Right lobe of liver (tissue), 6 donors: ENCODE measurements at regions of chr7 and their contacts with region 1.

Region 1: GRCh38 chr7:22559829-22560489 is 60.0 kb upstream of the STEAP1B start:
- DNase-seq: peak in 2 of 3 donors; percentile 56 to 71
- ATAC-seq: peak; percentile 91 to 94 (median 91)
- H3K4me3 ChIP-seq: no peak overlapping the region
- H3K27ac ChIP-seq: no peak overlapping the region
- H3K4me1 ChIP-seq: peaks cover 0 to 10% (median 4%) of the 10 kb centered on the region in 4 donors
- H3K27me3 ChIP-seq: no peaks in the 10 kb centered on the region
- CTCF ChIP-seq: peak; percentile 85 to 96 (median 90)
- POLR2A ChIP-seq: no peak

Region 2: DNA sequence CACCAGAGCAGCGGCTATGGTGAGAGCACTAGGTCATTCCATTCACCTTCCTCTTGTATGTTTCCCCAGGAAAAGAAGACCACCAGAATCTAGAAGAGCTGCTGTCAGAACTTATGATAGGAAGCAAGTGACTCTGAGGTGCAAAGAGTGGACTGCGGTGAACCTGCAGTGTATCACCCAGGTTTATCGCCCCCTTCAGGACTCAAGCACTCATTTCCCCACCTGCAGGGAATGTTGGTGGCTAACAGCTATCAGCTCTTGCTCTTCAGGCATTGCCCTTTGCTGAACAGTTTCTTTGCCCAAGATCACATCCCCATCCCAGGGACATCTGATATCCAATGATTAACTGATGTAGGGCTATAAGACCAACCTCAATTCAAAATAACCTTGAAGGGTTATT is 100.8 kb after region 1 on chr7:
- intact Hi-C with region 1: no loop called
- DNase-seq: no peak
- ATAC-seq: peak in 3 of 4 donors; percentile 24 to 51 (median 35)
- H3K4me3 ChIP-seq: no peak overlapping the region
- H3K27ac ChIP-seq: no peak overlapping the region
- H3K4me1 ChIP-seq: no peaks in the 10 kb centered on the region
- H3K27me3 ChIP-seq: no peaks in the 10 kb centered on the region
- CTCF ChIP-seq: peak in 3 of 4 donors; percentile 16 to 30 (median 29)
- POLR2A ChIP-seq: no peak

Region 3: DNA sequence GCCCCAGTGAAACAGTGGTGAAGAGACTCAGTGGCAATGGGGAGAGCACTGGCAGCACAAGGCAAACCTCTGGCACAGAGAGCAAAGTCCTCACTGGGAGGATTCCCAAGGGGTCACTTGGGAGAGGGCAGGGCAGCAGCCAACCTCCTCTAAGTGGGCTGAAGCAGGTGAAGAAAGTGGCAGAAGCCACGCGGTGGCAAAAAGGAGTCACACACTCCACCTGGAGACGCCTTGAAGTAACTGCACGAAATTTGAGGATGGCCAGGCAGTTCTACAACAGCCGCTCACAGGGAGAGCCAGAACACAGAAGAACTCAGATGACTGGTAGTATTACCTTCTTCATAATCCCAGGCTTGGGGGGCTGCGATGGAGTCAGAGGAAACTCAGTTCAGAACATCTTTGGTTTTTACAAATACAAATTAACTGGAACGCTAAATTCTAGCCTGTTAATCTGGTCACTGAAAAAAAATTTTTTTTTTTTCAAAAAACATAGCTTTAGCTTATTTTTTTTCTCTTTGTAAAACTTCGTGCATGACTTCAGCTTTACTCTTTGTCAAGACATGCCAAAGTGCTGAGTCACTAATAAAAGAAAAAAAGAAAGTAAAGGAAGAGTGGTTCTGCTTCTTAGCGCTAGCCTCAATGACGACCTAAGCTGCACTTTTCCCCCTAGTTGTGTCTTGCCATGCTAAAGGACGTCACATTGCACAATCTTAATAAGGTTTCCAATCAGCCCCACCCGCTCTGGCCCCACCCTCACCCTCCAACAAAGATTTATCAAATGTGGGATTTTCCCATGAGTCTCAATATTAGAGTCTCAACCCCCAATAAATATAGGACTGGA is 166.6 kb after region 1 on chr7:
- intact Hi-C with region 1: loop called (anchors 5 to 10 kb)
- DNase-seq: peak in 1 of 3 donors; percentile 48
- ATAC-seq: peak; percentile 28 to 49 (median 32)
- H3K4me3 ChIP-seq: peak overlapping the region in 2 of 3 donors; percentile 20 to 23
- H3K27ac ChIP-seq: peak overlapping the region in 1 of 3 donors; percentile 20
- H3K4me1 ChIP-seq: peaks cover 0 to 29% (median 0%) of the 10 kb centered on the region in 4 donors
- H3K27me3 ChIP-seq: no peaks in the 10 kb centered on the region
- CTCF ChIP-seq: peak; percentile 14 to 42 (median 29)
- POLR2A ChIP-seq: no peak

Region 4: DNA sequence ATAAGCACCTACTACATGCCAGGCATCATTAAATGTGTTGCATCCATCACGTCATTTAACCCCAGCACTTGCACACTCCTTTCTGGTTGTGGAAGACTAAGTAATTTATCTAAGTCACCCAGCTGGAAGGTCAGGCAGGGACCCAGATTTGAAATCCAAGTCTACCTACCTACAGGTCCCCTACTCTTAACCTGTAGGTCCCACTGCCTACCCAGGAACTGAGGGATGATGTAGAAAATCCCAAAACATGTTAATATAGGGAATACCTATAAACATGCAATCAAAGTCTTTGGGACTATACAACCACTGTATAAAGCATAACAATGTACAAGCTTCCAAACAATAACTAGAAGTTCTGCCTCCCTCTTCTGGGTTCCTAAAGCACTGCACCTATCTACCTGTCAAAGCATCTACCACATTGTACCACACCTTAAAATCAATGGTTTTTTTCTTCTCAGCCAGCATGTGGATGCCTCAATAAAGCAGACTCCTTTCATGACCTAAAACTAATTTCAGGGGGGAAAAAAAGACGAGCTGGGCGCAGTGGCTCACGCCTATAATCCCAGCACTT is 172.7 kb after region 1 on chr7:
- intact Hi-C with region 1: loop called (anchors 5 to 10 kb)
- DNase-seq: no peak
- ATAC-seq: peak in 3 of 4 donors; percentile 40 to 59 (median 41)
- H3K4me3 ChIP-seq: no peak overlapping the region
- H3K27ac ChIP-seq: no peak overlapping the region
- H3K4me1 ChIP-seq: no peaks in the 10 kb centered on the region
- H3K27me3 ChIP-seq: no peaks in the 10 kb centered on the region
- CTCF ChIP-seq: peak; percentile 17 to 32 (median 26)
- POLR2A ChIP-seq: no peak

Region 5: GRCh38 chr7:22782616-22783232 is 222.8 kb after region 1 on chr7:
- intact Hi-C with region 1: loop called in 1 of 2 experiments (anchors 10 kb)
- DNase-seq: peak; percentile 67 to 78 (median 72)
- ATAC-seq: peak; percentile 86 to 95 (median 92)
- H3K4me3 ChIP-seq: no peak overlapping the region
- H3K27ac ChIP-seq: no peak overlapping the region
- H3K4me1 ChIP-seq: peaks cover 0 to 11% (median 3%) of the 10 kb centered on the region in 4 donors
- H3K27me3 ChIP-seq: no peaks in the 10 kb centered on the region
- CTCF ChIP-seq: peak; percentile 66 to 87 (median 79)
- POLR2A ChIP-seq: no peak

Region 6: GRCh38 chr7:22833113-22833855 is 273.3 kb after region 1 on chr7:
- intact Hi-C with region 1: no loop called
- DNase-seq: no peak
- ATAC-seq: no peak
- H3K4me3 ChIP-seq: no peak overlapping the region
- H3K27ac ChIP-seq: peak overlapping the region in 1 of 3 donors; percentile 24
- H3K4me1 ChIP-seq: no peaks in the 10 kb centered on the region
- H3K27me3 ChIP-seq: no peaks in the 10 kb centered on the region
- CTCF ChIP-seq: no peak
- POLR2A ChIP-seq: no peak

Region 7: DNA sequence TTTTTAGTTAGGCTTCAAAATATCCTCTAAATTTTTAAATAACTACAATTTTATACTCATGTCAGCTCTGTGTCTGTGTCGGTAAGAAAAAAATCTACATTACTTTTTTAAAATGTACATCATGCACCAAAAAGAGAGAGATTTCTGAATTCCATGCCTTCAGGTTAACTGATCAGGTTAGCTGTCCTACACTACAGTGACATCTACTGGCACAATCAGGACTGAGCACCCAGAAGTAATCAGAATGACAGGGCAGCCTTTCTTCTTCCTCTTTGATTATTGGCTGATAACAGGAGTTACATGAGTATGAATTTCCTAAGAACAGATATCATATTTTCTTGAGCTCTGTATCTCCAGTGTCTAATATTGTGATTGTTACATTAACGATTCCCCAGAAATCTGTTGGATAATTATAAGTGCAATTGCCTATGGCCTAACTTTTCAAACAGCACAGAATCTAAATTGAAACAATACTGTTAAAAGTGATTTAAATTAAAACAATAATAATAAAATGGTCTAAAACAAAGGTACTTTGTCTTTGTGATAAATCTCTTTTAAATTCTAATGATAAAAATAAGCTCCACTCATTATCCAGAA is 495.7 kb after region 1 on chr7:
- intact Hi-C with region 1: loop called in 1 of 2 experiments (anchors 10 kb)
- DNase-seq: peak in 1 of 3 donors; percentile 57
- ATAC-seq: peak; percentile 93 to 98 (median 96)
- H3K4me3 ChIP-seq: no peak overlapping the region
- H3K27ac ChIP-seq: no peak overlapping the region
- H3K4me1 ChIP-seq: no peaks in the 10 kb centered on the region
- H3K27me3 ChIP-seq: no peaks in the 10 kb centered on the region
- CTCF ChIP-seq: peak; percentile 86 to 94 (median 93)
- POLR2A ChIP-seq: no peak